ENCODE measurements at regions of chr7 and their contacts with region 1.

Region 1: DNA sequence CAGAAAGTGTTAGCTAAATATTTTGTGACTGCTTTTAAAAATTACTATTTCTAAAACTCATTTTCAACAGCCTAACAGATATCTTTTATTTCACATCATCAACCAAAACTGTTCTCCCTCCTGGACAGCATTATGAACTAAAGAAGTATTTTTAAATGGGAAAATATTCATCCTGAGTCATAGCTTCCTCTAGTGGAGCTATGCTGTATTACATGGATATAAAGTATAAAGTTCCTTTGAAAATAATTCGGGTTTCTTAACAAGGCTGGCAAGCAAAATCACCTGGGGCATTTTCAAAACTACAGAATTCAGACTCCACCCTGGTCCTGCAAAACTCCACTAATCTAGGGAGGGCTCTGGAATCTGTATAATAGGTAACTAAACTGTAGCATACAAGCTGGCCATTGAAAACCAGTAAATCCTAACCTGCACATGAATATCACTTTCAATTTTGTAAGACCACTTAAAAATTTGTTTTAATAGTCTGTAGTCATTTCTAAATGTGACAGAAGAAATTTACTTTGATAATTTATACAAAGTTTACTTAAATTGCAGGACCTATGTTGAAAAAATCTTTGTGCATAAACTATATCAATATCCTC is 53.5 kb downstream of the SCIN start:
- DNase-seq: no peak
- ATAC-seq: no peak
- H3K4me3 ChIP-seq: no peak overlapping the region
- H3K27ac ChIP-seq: no peak overlapping the region
- H3K4me1 ChIP-seq: no peaks in the 10 kb centered on the region
- H3K27me3 ChIP-seq: no peaks in the 10 kb centered on the region

Region 2: DNA sequence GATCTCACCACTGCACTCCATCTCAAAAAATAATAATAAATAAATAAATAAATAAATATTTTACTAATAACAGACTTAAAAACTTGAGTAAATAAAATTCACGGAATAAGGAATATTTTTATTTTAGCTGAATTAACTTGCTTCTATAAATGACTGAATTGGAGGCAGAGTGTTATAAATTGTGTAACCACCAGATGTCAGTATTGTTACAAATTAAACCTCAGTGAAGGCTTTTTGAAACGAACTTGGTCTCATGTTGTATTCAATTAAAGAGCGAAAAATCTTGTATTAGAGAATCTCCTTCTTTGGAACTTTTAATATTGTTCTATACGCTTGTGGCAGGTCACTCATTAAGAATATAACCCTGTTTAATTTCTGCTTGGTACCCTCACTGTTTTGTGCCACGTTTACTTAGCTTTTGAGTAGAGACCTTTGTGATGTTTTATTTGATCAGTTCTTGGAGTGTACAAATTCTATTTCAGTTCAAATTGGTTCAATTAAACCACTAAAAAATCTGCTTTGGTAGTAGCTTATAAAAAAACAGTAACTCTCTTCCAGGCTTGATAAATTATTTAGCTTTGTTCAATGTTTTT is 99.1 kb before region 1 on chr7:
- intact Hi-C with region 1: loop called in 3 of 4 experiments (anchors 10 kb)
- DNase-seq: no peak
- ATAC-seq: no peak
- H3K4me3 ChIP-seq: no peak overlapping the region
- H3K27ac ChIP-seq: no peak overlapping the region
- H3K4me1 ChIP-seq: no peaks in the 10 kb centered on the region
- H3K27me3 ChIP-seq: no peaks in the 10 kb centered on the region